ENCODE measurements at regions of chr14 and their contacts with region 1.

Region 1: GRCh38 chr14:45705940-45706534 is 453.0 kb upstream of the MIS18BP1 start:
- DNase-seq: no peak
- ATAC-seq: no peak
- H3K4me3 ChIP-seq: no peak overlapping the region
- H3K27ac ChIP-seq: no peak overlapping the region
- H3K4me1 ChIP-seq: no peaks in the 10 kb centered on the region
- H3K27me3 ChIP-seq: no peaks in the 10 kb centered on the region
- CTCF ChIP-seq: no peak
- EP300 ChIP-seq: no peak
- POLR2A ChIP-seq: no peak
- RAD21 ChIP-seq: no peak

Region 2: GRCh38 chr14:45678163-45678562 is 27.9 kb before region 1 on chr14:
- CTCF ChIA-PET with region 1: no interaction called
- POLR2A ChIA-PET with region 1: no interaction called
- RAD21 ChIA-PET with region 1: no interaction called
- SMC1A ChIA-PET with region 1: interaction called, 3 read pairs
- in situ Hi-C with region 1: no loop called
- intact Hi-C with region 1: loop called (anchors 1 kb)
- DNase-seq: no peak
- ATAC-seq: no peak
- H3K4me3 ChIP-seq: no peak overlapping the region
- H3K27ac ChIP-seq: no peak overlapping the region
- H3K4me1 ChIP-seq: no peaks in the 10 kb centered on the region
- H3K27me3 ChIP-seq: no peaks in the 10 kb centered on the region
- CTCF ChIP-seq: no peak
- EP300 ChIP-seq: no peak
- POLR2A ChIP-seq: no peak
- RAD21 ChIP-seq: no peak

Region 3: GRCh38 chr14:45716572-45716971 is 10.5 kb after region 1 on chr14:
- CTCF ChIA-PET with region 1: interaction called, 6 read pairs
- POLR2A ChIA-PET with region 1: interaction called, 7 read pairs
- RAD21 ChIA-PET with region 1: interaction called, 8 read pairs
- SMC1A ChIA-PET with region 1: interaction called, 20 read pairs
- in situ Hi-C with region 1: no loop called
- intact Hi-C with region 1: no loop called
- DNase-seq: no peak
- ATAC-seq: no peak; the same call in 2 of the 3 replicates
- H3K4me3 ChIP-seq: no peak overlapping the region
- H3K27ac ChIP-seq: no peak overlapping the region
- H3K4me1 ChIP-seq: no peaks in the 10 kb centered on the region
- H3K27me3 ChIP-seq: no peaks in the 10 kb centered on the region
- CTCF ChIP-seq: no peak
- EP300 ChIP-seq: no peak
- POLR2A ChIP-seq: no peak
- RAD21 ChIP-seq: no peak

Measured in GM12878 (cell line).